Endothelial cell of umbilical vein (primary cell): ENCODE measurements at regions of chr4 and their contacts with region 1.

Region 1: DNA sequence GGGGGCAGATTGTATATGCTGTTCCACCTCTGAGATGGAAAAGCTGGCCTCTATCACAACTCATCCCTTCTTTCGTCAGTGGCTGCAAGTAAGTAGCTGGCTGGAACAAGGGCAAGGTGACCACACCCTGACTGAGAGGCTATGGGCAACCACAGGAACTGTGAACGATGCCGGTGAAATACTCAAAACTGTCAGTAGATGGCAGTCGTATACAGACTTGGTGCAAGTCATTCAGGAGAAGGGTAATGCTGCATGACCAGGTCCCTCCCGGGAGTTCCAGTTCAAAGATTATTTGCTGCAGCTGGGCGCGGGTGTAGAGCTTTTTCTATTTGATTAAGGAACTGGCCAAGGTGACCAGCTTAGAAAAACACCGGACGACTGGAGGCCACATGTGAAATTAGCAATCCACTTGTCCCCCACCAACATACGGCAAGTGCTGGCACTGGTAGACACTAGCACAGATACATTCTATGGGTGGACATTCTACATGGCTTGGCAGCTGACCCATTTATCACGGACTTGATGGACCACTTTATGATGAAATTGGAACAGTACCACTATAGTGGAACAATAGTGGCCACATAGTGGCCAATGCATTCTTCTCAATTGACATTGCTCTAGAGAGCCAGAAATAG is 726.7 kb downstream of the TRAM1L1 start:
- DNase-seq: peak; percentile 73
- H3K4me3 ChIP-seq: no peak overlapping the region
- H3K27ac ChIP-seq: no peak overlapping the region
- H3K4me1 ChIP-seq: no peaks in the 10 kb centered on the region
- H3K27me3 ChIP-seq: no peaks in the 10 kb centered on the region
- CTCF ChIP-seq: peak; percentile 62 to 67
- POLR2A ChIP-seq: no peak

Region 2: GRCh38 chr4:115770046-115770543 is 588.6 kb before region 1 on chr4:
- CTCF ChIA-PET with region 1: no interaction called
- POLR2A ChIA-PET with region 1: no interaction called
- dilution Hi-C with region 1: no loop called
- intact Hi-C with region 1: no loop called
- DNase-seq: no peak
- H3K4me3 ChIP-seq: no peak overlapping the region
- H3K27ac ChIP-seq: no peak overlapping the region
- H3K4me1 ChIP-seq: no peaks in the 10 kb centered on the region
- H3K27me3 ChIP-seq: no peaks in the 10 kb centered on the region
- CTCF ChIP-seq: no peak
- POLR2A ChIP-seq: no peak

Region 3: DNA sequence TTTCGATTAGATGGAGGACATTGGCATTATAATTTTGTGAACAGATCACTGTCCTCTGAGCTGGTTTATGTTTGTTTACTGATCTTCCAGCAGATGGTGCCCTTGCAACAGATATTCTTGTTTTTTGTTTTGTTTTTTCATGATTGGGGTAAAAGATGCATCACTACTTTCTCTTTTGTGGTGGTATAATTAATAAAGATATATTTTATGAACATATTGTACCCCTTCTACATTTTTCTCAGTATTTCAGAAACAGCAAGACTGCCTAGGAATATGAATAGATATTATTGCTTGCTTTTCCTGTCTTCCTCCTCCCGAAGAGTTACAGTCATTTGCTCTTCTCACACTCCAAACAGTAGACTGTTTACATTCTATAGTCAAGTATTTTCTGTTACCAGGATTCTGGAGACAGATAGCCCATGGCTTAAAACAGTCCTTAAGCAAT is 178.5 kb before region 1 on chr4:
- CTCF ChIA-PET with region 1: interaction called, 19 read pairs
- POLR2A ChIA-PET with region 1: no interaction called
- dilution Hi-C with region 1: no loop called
- intact Hi-C with region 1: loop called (anchors 2 kb)
- DNase-seq: peak; percentile 14
- H3K4me3 ChIP-seq: peak overlapping the region in 2 of 3 experiments; percentile 14 to 40
- H3K27ac ChIP-seq: no peak overlapping the region
- H3K4me1 ChIP-seq: peaks cover 2% of the 10 kb centered on the region
- H3K27me3 ChIP-seq: no peaks in the 10 kb centered on the region
- CTCF ChIP-seq: peak; percentile 13 to 27
- POLR2A ChIP-seq: no peak

Region 4: DNA sequence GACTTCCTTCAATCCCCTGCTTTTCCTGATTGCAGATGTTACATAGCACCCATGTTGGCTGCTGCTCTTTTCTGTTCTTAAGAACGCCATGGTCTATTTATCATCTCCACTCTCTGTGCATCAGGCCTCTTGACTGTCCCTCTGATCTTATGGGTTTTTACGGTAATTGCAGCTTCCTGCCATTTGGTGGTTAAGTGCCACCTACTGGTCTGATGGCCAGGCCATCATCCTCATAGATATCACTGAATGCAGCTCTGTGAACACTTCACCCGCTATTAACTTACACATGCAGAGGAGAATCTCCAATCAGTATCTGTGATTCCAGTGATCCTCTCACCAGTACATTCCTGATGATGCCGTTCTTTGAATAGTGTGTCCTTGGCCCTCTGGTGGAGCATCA is 344.2 kb after region 1 on chr4:
- CTCF ChIA-PET with region 1: interaction called, 12 read pairs
- POLR2A ChIA-PET with region 1: no interaction called
- dilution Hi-C with region 1: no loop called
- intact Hi-C with region 1: loop called (anchors 1 kb)
- DNase-seq: peak; percentile 26
- H3K4me3 ChIP-seq: no peak overlapping the region
- H3K27ac ChIP-seq: no peak overlapping the region
- H3K4me1 ChIP-seq: no peaks in the 10 kb centered on the region
- H3K27me3 ChIP-seq: no peaks in the 10 kb centered on the region
- CTCF ChIP-seq: peak; percentile 8 to 23
- POLR2A ChIP-seq: no peak

Region 5: DNA sequence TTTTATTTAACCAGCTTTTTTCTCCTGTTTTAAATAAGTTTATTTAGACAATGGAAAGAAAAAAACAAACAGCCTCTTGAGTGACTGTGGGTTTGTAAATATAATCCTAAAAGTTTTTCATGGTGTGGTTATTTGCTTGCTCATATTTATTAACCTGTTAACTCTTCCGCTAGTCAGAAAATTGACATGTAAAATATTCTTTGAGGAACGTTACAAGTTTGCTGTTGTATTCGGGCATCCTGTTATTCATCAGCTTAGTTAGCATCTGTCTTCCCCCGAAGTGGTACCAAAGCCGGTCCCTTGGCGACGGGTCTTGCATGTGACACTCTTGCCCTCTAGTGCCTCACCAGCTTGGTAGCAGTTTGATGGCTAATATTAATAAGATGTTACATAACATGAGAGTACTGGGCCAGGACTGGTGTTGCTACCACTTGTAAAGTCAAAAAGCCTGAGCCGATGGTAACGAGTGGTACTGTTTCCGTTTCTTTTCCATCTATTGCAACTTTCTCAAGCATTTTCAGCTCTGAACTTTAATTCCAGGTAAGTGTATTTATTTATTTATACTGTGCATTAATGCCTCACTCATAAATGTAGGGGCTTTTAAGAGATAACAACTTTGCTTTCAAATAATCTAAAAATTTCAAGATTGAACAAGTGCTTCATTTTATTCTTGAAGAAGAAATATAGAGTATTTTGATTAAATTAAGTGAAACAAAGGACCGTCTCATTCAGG is 1675.5 kb after region 1 on chr4 and contains the start of gene NDST3:
- CTCF ChIA-PET with region 1: interaction called, 10 read pairs
- POLR2A ChIA-PET with region 1: no interaction called
- dilution Hi-C with region 1: no loop called
- intact Hi-C with region 1: loop called (anchors 1 kb)
- DNase-seq: peak; percentile 62
- H3K4me3 ChIP-seq: peak within 1 kb of the TSS; percentile 30 to 47 (median 37)
- H3K27ac ChIP-seq: no peak within 1 kb of the TSS
- H3K4me1 ChIP-seq: peaks cover 5% of the 10 kb centered on the region
- H3K27me3 ChIP-seq: peaks cover 10 to 27% of the 10 kb centered on the region in 2 experiments
- CTCF ChIP-seq: peak; percentile 40 to 46
- POLR2A ChIP-seq: no peak
- total RNA-seq, gene NDST3: not detected in 2 replicates

Region 6: DNA sequence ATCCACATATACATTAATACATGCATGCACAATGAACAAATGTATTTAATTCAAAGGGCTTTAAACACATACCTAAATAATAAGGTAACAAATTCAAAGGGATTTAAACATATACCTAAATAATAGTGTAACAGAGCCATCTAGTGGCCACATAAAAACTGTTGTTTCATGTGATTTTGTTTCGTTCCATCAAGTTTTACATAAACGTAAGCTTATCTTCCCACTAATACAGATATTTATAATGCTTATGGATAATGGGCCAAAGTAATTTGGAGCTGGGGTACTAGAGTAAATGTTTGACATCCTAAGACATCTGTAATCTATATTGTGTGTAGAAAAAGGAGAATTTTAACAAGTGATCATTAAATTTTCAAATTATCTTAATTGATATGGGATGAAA is 1911.8 kb after region 1 on chr4:
- CTCF ChIA-PET with region 1: interaction called, 6 read pairs
- POLR2A ChIA-PET with region 1: no interaction called
- dilution Hi-C with region 1: no loop called
- intact Hi-C with region 1: loop called (anchors 5 kb)
- DNase-seq: peak; percentile 63
- H3K4me3 ChIP-seq: no peak overlapping the region
- H3K27ac ChIP-seq: no peak overlapping the region
- H3K4me1 ChIP-seq: no peaks in the 10 kb centered on the region
- H3K27me3 ChIP-seq: peaks cover 16 to 27% of the 10 kb centered on the region in 2 experiments
- CTCF ChIP-seq: peak; percentile 21 to 32
- POLR2A ChIP-seq: no peak